ENCODE measurements at regions of chrX and their contacts with region 1.

Region 1: GRCh38 chrX:53284684-53285447 is 3.5 kb upstream of the IQSEC2 start:
- DNase-seq: peak; percentile 35
- H3K4me3 ChIP-seq: no peak overlapping the region
- H3K27ac ChIP-seq: no peak overlapping the region
- H3K4me1 ChIP-seq: peaks cover 19% of the 10 kb centered on the region
- H3K27me3 ChIP-seq: no peaks in the 10 kb centered on the region
- CTCF ChIP-seq: peak; percentile 66 to 78
- POLR2A ChIP-seq: no peak

Region 2: DNA sequence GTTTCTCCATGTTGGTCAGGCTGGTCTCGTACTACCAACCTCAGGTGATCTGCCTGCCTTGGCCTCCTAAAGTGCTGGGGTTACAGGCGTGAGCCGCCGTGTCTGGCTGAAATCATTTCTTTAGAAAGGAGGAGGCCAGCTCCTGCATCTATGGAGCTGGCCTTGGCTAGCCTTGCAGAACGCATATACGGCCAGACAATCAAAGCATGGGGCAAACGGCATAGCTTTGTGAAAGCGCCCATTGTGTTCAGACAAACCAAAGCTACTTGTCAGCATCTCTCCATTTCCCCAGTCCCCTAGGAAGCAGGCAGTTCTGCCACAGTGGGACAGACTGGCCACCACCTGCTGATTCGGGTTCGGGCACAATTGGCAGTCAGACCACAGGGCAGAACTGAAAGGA is 45.5 kb after region 1 on chrX:
- CTCF ChIA-PET with region 1: interaction called, 4 read pairs
- POLR2A ChIA-PET with region 1: no interaction called
- dilution Hi-C with region 1: no loop called
- intact Hi-C with region 1: loop called (anchors 1 kb)
- DNase-seq: no peak
- H3K4me3 ChIP-seq: no peak overlapping the region
- H3K27ac ChIP-seq: no peak overlapping the region
- H3K4me1 ChIP-seq: peaks cover 16% of the 10 kb centered on the region
- H3K27me3 ChIP-seq: peaks cover 3 to 10% of the 10 kb centered on the region in 2 experiments
- CTCF ChIP-seq: no peak
- POLR2A ChIP-seq: no peak

Region 3: DNA sequence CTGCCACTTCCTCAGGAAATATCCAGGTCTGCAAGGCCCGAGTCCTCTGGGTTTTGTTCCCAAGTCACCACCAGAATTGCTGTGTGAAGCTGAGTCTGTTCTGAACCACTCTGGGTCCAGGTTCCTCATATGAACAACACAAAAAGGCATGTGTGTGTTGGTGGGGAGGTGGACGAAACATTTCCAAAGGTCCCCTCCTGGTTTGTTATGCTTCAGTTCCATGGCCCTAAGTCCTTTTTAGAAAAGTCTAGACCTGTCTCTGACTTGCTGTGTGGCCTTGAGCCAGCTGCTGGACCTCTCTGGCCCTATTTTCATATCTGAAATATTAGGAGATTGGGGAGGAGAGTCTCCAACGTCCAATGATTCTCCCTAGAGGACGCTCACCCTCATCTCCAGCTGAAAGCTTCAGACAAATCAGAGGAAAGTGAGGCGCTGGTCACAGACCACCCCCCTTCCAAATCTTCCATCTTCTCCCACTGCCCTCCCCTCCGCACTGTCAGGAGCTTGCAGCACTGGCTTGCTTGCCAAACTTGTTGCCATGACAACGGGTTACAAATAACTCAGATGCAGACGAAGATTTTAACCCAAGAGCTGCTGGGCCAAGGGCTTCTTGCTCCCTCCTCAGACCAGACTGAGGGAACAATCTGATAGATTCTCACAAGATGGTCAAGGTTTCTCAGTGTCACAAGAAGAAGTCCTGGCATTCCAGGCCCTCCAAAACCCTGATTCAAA is 73.1 kb after region 1 on chrX:
- CTCF ChIA-PET with region 1: no interaction called
- POLR2A ChIA-PET with region 1: no interaction called
- dilution Hi-C with region 1: no loop called
- intact Hi-C with region 1: no loop called
- DNase-seq: no peak
- H3K4me3 ChIP-seq: no peak overlapping the region
- H3K27ac ChIP-seq: no peak overlapping the region
- H3K4me1 ChIP-seq: no peaks in the 10 kb centered on the region
- H3K27me3 ChIP-seq: no peaks in the 10 kb centered on the region
- CTCF ChIP-seq: no peak
- POLR2A ChIP-seq: no peak

Region 4: DNA sequence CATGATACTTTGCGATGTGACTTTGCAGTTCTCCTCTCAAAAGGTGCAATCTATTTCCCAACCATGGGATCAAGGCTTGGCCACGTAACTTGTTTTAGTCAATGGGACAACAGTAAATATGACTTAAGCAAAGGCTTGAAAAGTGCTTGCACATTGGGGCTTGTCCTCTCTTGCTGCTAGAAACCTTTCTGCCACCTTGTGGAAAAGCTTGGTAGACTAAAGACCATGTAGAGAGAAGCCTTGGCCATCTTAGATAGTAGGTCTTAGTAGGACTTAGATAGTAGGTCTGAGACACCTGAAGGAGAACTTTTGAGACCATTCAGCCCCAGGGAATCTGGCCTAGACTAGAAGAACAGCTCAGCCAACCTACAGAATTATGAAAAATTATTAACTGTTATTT is 677.0 kb after region 1 on chrX:
- CTCF ChIA-PET with region 1: no interaction called
- POLR2A ChIA-PET with region 1: no interaction called
- dilution Hi-C with region 1: no loop called
- intact Hi-C with region 1: no loop called
- DNase-seq: no peak
- H3K4me3 ChIP-seq: no peak overlapping the region
- H3K27ac ChIP-seq: no peak overlapping the region
- H3K4me1 ChIP-seq: no peaks in the 10 kb centered on the region
- H3K27me3 ChIP-seq: no peaks in the 10 kb centered on the region
- CTCF ChIP-seq: no peak
- POLR2A ChIP-seq: no peak

Measured in endothelial cell of umbilical vein (primary cell).